ENCODE measurements at regions of chr3 and their contacts with region 1.

Region 1: GRCh38 chr3:31531992-31532586 is 636 bp upstream of the STT3B start:
- DNase-seq: peak; percentile 98
- H3K4me3 ChIP-seq: peak overlapping the region; percentile 9 to 84
- H3K4me3 Mint-ChIP-seq: peak overlapping the region in 7 of 8 donors; percentile 92 to 99 (median 98)
- H3K27ac ChIP-seq: peak overlapping the region; percentile 88
- H3K27ac Mint-ChIP-seq: peak overlapping the region in 6 of 7 donors; percentile 97 to 99 (median 98)
- H3K4me1 ChIP-seq: peaks cover 31% of the 10 kb centered on the region
- H3K4me1 Mint-ChIP-seq: peaks cover 9 to 33% (median 16%) of the 10 kb centered on the region in 4 donors
- H3K27me3 ChIP-seq: no peaks in the 10 kb centered on the region
- H3K27me3 Mint-ChIP-seq: no peaks in the 10 kb centered on the region

Region 2: GRCh38 chr3:30768703-30769685 is 763.1 kb before region 1 on chr3:
- CTCF ChIA-PET with region 1: no interaction called
- POLR2A ChIA-PET with region 1: no interaction called
- intact Hi-C with region 1: loop called (anchors 10 kb)
- DNase-seq: peak; percentile 54 to 62 (median 56)
- H3K4me3 ChIP-seq: no peak overlapping the region
- H3K4me3 Mint-ChIP-seq: no peak overlapping the region
- H3K27ac ChIP-seq: no peak overlapping the region
- H3K27ac Mint-ChIP-seq: peak overlapping the region in 1 of 7 donors; percentile 4
- H3K4me1 ChIP-seq: no peaks in the 10 kb centered on the region
- H3K4me1 Mint-ChIP-seq: peaks cover 0 to 4% (median 2%) of the 10 kb centered on the region in 4 donors
- H3K27me3 ChIP-seq: no peaks in the 10 kb centered on the region
- H3K27me3 Mint-ChIP-seq: peaks cover 2 to 5% of the 10 kb centered on the region in 2 donors

Region 3: GRCh38 chr3:31227131-31227562 is 304.9 kb before region 1 on chr3:
- CTCF ChIA-PET with region 1: interaction called, 22 read pairs
- POLR2A ChIA-PET with region 1: interaction called, 181 read pairs
- intact Hi-C with region 1: loop called (anchors 1 kb)
- DNase-seq: peak; percentile 49 to 82 (median 73)
- H3K4me3 ChIP-seq: no peak overlapping the region
- H3K4me3 Mint-ChIP-seq: peak overlapping the region; percentile 38 to 74 (median 64)
- H3K27ac ChIP-seq: peak overlapping the region; percentile 45
- H3K27ac Mint-ChIP-seq: peak overlapping the region; percentile 81 to 96 (median 93)
- H3K4me1 ChIP-seq: peaks cover 99% of the 10 kb centered on the region
- H3K4me1 Mint-ChIP-seq: peaks cover 71 to 96% (median 86%) of the 10 kb centered on the region in 4 donors
- H3K27me3 ChIP-seq: no peaks in the 10 kb centered on the region
- H3K27me3 Mint-ChIP-seq: no peaks in the 10 kb centered on the region

Region 4: GRCh38 chr3:31469385-31469784 is 62.7 kb before region 1 on chr3:
- CTCF ChIA-PET with region 1: interaction called, 48 read pairs
- POLR2A ChIA-PET with region 1: interaction called, 187 read pairs
- intact Hi-C with region 1: no loop called
- DNase-seq: no peak
- H3K4me3 ChIP-seq: no peak overlapping the region
- H3K4me3 Mint-ChIP-seq: no peak overlapping the region
- H3K27ac ChIP-seq: no peak overlapping the region
- H3K27ac Mint-ChIP-seq: no peak overlapping the region
- H3K4me1 ChIP-seq: peaks cover 32% of the 10 kb centered on the region
- H3K4me1 Mint-ChIP-seq: peaks cover 29 to 56% (median 42%) of the 10 kb centered on the region in 4 donors
- H3K27me3 ChIP-seq: no peaks in the 10 kb centered on the region
- H3K27me3 Mint-ChIP-seq: no peaks in the 10 kb centered on the region

Region 5: DNA sequence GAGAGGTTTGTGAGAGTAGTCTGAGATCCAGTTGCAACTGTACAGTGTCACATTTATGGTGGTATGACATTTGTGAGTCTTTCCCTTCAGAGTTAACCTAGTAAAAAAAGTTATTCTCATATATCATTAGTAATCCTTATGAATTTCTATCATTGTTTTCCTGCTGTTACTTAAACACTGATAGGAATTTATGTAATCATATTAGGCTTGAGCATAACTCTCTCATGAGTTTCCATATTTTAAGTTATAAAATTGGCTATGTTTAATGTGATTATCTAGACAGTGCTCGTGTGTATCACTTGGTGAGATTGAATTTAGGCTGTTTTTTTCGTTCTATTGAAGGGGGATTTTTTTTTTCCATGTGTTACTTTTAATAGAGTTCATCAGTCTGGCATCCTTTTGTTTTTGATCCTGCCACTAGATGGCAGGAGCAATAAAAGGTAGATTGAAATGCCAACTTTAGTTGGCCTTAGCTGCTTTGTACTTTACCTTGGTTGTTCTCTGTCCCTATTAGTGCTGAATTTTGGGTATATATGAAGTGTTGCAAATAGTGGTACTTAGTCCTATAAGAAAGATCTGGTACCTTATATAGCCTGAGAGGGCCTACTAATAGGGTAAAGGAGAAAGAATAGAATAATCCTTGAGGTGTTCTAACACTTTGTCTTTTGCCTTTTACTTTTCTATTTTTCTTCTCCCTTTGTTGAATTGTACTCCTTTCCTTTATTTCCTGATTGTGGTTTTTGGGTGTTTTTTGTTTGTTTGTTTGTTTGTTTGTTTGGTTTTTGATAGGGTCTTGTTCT is 18.6 kb after region 1 on chr3:
- CTCF ChIA-PET with region 1: interaction called, 21 read pairs
- POLR2A ChIA-PET with region 1: interaction called, 42 read pairs
- intact Hi-C with region 1: loop called (anchors 2 kb)
- DNase-seq: peak in 4 of 5 donors; percentile 28 to 40 (median 37)
- H3K4me3 ChIP-seq: no peak overlapping the region
- H3K4me3 Mint-ChIP-seq: peak overlapping the region; percentile 6 to 66 (median 46)
- H3K27ac ChIP-seq: no peak overlapping the region
- H3K27ac Mint-ChIP-seq: peak overlapping the region in 4 of 7 donors; percentile 37 to 85 (median 43)
- H3K4me1 ChIP-seq: peaks cover 84% of the 10 kb centered on the region
- H3K4me1 Mint-ChIP-seq: peaks cover 68 to 93% (median 81%) of the 10 kb centered on the region in 4 donors
- H3K27me3 ChIP-seq: no peaks in the 10 kb centered on the region
- H3K27me3 Mint-ChIP-seq: no peaks in the 10 kb centered on the region

Region 6: GRCh38 chr3:31634481-31634880 is 102.4 kb after region 1 on chr3:
- CTCF ChIA-PET with region 1: interaction called, 6 read pairs
- POLR2A ChIA-PET with region 1: interaction called, 12 read pairs
- intact Hi-C with region 1: no loop called
- DNase-seq: no peak
- H3K4me3 ChIP-seq: no peak overlapping the region
- H3K4me3 Mint-ChIP-seq: peak overlapping the region in 3 of 8 donors; percentile 30 to 50 (median 50)
- H3K27ac ChIP-seq: no peak overlapping the region
- H3K27ac Mint-ChIP-seq: peak overlapping the region in 6 of 7 donors; percentile 1 to 86 (median 48)
- H3K4me1 ChIP-seq: peaks cover 47% of the 10 kb centered on the region
- H3K4me1 Mint-ChIP-seq: peaks cover 43 to 71% (median 51%) of the 10 kb centered on the region in 4 donors
- H3K27me3 ChIP-seq: no peaks in the 10 kb centered on the region
- H3K27me3 Mint-ChIP-seq: no peaks in the 10 kb centered on the region

Measured in CD4-positive, alpha-beta memory T cell (primary cell).